Activated naive CD4-positive, alpha-beta T cell treated with anti-CD3 and anti-CD28 coated beads for 36 hours (primary cell): ENCODE measurements at regions of chr4 and their contacts with region 1.

Region 1: DNA sequence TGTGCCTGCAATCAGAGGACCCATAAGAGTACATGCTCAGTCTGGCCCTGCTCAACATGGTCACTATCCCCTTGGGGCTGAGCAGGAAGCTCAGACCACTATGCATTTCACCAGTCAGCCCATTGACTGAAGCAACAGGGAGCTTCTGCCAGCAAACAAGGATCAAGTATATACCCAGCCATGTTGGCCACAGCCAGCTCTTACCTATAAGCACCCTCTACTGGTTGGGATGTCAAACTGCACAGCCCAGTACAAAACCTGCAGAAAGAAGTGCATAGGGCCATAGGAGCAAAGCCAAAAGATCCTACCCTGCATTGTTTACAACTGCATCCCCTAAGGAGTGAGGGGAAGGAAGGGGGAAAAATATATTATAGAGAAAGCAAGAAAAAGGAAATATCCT is 214.4 kb upstream of the CPEB2 start:
- DNase-seq: peak; percentile 41
- H3K4me3 Mint-ChIP-seq: no peak overlapping the region
- H3K27ac Mint-ChIP-seq: no peak overlapping the region
- H3K4me1 Mint-ChIP-seq: peaks cover 21% of the 10 kb centered on the region
- H3K27me3 Mint-ChIP-seq: peaks cover 33% of the 10 kb centered on the region

Region 2: DNA sequence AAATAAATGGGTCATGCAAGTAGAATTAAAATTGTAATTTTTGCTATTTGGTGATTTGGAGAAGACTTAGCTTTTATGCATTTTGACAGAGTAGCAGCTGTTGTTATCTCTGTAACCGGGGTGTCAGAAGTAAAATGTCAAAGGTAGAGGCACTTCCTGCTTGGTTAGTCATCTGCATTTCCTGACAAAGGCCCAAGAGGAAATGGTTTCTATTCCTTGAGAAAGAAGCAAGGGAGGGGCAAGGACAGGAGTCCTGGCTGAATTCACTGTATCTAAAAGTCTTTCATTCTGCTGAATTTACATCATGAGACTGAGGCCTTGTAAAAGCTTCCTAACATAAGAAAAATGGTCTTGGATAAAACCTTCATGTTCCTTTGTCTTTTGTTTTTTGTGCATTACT is 609.5 kb before region 1 on chr4:
- CTCF ChIA-PET with region 1: no interaction called
- intact Hi-C with region 1: loop called (anchors 10 kb)
- DNase-seq: peak; percentile 7
- H3K4me3 Mint-ChIP-seq: no peak overlapping the region
- H3K27ac Mint-ChIP-seq: peak overlapping the region; percentile 75
- H3K4me1 Mint-ChIP-seq: peaks cover 20% of the 10 kb centered on the region
- H3K27me3 Mint-ChIP-seq: no peaks in the 10 kb centered on the region

Region 3: DNA sequence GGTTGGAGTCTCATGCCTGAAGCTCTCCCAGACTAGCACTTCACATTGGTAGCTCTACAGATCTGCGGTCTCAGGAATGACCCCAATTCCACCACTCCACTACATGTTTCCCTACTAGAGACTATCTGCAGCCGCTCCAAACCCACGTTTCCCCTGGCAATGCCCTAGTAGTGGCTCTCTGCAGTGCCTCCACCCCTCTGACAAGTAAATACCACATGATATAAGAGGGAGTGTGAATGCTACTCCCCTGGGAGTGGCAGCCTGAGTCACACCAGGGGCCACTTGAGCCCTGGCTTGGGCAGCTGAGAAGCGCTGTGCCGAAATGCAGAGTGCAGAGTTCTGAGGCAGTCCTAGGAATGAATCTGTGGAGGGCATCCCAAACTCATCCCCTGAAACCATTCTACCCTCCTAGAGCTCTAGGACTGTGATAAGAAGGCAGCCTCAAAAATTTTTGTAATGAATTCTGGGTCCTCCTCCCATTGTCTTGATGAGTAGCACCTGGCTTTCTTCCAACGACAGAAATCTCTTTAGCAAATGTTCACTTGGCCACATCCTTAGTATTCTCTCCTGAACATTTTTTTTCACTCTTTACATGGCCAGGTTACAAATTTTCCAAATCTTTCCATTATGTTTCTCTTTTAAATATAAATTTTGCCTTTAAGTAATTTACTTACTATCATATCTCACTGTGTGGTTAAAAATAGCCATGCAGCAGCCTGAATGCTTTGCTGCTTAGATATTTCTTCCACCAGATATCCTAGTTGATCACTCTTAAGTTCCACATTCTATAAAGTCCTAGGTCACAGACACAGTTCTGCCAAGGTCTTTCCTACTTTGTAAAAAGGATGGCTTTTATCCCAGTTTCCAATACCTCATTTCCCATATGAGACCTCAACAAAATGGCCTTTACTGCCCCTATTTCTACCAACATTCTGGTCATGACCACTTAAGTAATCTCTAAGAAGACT is 54.2 kb after region 1 on chr4:
- CTCF ChIA-PET with region 1: no interaction called
- intact Hi-C with region 1: loop called (anchors 1 kb)
- DNase-seq: no peak
- H3K4me3 Mint-ChIP-seq: no peak overlapping the region
- H3K27ac Mint-ChIP-seq: peak overlapping the region; percentile 65
- H3K4me1 Mint-ChIP-seq: peaks cover 13% of the 10 kb centered on the region
- H3K27me3 Mint-ChIP-seq: peaks cover 4% of the 10 kb centered on the region

Region 4: GRCh38 chr4:14862891-14863290 is 75.0 kb after region 1 on chr4:
- CTCF ChIA-PET with region 1: no interaction called
- intact Hi-C with region 1: no loop called
- DNase-seq: no peak
- H3K4me3 Mint-ChIP-seq: no peak overlapping the region
- H3K27ac Mint-ChIP-seq: no peak overlapping the region
- H3K4me1 Mint-ChIP-seq: no peaks in the 10 kb centered on the region
- H3K27me3 Mint-ChIP-seq: peaks cover 37% of the 10 kb centered on the region

Region 5: GRCh38 chr4:15117270-15117946 is 329.5 kb after region 1 on chr4:
- CTCF ChIA-PET with region 1: no interaction called
- intact Hi-C with region 1: loop called (anchors 1 kb)
- DNase-seq: peak; percentile 13
- H3K4me3 Mint-ChIP-seq: no peak overlapping the region
- H3K27ac Mint-ChIP-seq: no peak overlapping the region
- H3K4me1 Mint-ChIP-seq: peaks cover 11% of the 10 kb centered on the region
- H3K27me3 Mint-ChIP-seq: peaks cover 24% of the 10 kb centered on the region

Region 6: GRCh38 chr4:15423285-15423711 is 635.4 kb after region 1 on chr4:
- CTCF ChIA-PET with region 1: no interaction called
- intact Hi-C with region 1: loop called (anchors 1 kb)
- DNase-seq: peak; percentile 59
- H3K4me3 Mint-ChIP-seq: no peak overlapping the region
- H3K27ac Mint-ChIP-seq: peak overlapping the region; percentile 20
- H3K4me1 Mint-ChIP-seq: peaks cover 33% of the 10 kb centered on the region
- H3K27me3 Mint-ChIP-seq: no peaks in the 10 kb centered on the region